ENCODE measurements at regions of chr21 and their contacts with region 1.

Region 1: GRCh38 chr21:14545906-14546480 is at the start of gene SAMSN1:
- DNase-seq: peak; percentile 37 to 88 (median 67)
- ATAC-seq: peak; percentile 90
- H3K4me3 ChIP-seq: peak within 1 kb of the TSS; percentile 53 to 81
- H3K4me3 Mint-ChIP-seq: peak within 1 kb of the TSS; percentile 93
- H3K27ac ChIP-seq: peak within 1 kb of the TSS; percentile 65 to 70
- H3K27ac Mint-ChIP-seq: peak within 1 kb of the TSS; percentile 97
- H3K4me1 ChIP-seq: peaks cover 41% of the 10 kb centered on the region
- H3K4me1 Mint-ChIP-seq: peaks cover 60% of the 10 kb centered on the region
- H3K27me3 ChIP-seq: no peaks in the 10 kb centered on the region
- H3K27me3 Mint-ChIP-seq: no peaks in the 10 kb centered on the region
- CTCF ChIP-seq: no peak
- total RNA-seq, gene SAMSN1: 45.8 to 47.0 TPM

Region 2: GRCh38 chr21:14382835-14383594 is 163.0 kb before region 1 on chr21 and contains the start of gene HSPA13:
- CTCF ChIA-PET with region 1: no interaction called
- POLR2A ChIA-PET with region 1: no interaction called
- intact Hi-C with region 1: loop called (anchors 2 to 5 kb)
- DNase-seq: peak; percentile 97 to 100 (median 99)
- ATAC-seq: peak; percentile 91
- H3K4me3 ChIP-seq: peak within 1 kb of the TSS; percentile 65 to 92
- H3K4me3 Mint-ChIP-seq: peak within 1 kb of the TSS; percentile 100
- H3K27ac ChIP-seq: peak within 1 kb of the TSS; percentile 94 to 96
- H3K27ac Mint-ChIP-seq: peak within 1 kb of the TSS; percentile 100
- H3K4me1 ChIP-seq: peaks cover 24% of the 10 kb centered on the region
- H3K4me1 Mint-ChIP-seq: peaks cover 40% of the 10 kb centered on the region
- H3K27me3 ChIP-seq: no peaks in the 10 kb centered on the region
- H3K27me3 Mint-ChIP-seq: no peaks in the 10 kb centered on the region
- CTCF ChIP-seq: no peak
- total RNA-seq, gene HSPA13: 54.3 to 58.1 TPM

Region 3: DNA sequence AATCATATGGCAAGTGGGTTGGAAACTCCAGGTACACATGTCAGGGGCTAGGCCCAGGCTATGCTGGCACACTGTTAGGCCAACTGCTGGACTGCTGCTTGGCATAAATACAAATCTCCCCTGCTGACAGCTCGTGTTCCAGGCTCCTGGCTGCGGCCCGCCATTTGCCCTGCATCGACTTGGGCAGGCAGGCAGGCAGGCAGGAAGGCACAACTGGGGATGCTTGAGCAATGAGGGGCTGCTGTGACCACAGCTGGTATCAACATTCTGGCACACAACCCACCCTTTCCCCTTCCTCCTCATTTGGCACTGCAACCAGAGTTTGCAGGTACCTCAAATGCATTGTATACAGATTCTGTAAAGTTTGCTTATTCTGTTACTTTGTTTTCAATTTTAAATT is 53.1 kb before region 1 on chr21:
- CTCF ChIA-PET with region 1: no interaction called
- POLR2A ChIA-PET with region 1: no interaction called
- intact Hi-C with region 1: loop called in 1 of 2 experiments (anchors 10 kb)
- DNase-seq: no peak
- ATAC-seq: no peak
- H3K4me3 ChIP-seq: no peak overlapping the region
- H3K4me3 Mint-ChIP-seq: no peak overlapping the region
- H3K27ac ChIP-seq: no peak overlapping the region
- H3K27ac Mint-ChIP-seq: no peak overlapping the region
- H3K4me1 ChIP-seq: no peaks in the 10 kb centered on the region
- H3K4me1 Mint-ChIP-seq: no peaks in the 10 kb centered on the region
- H3K27me3 ChIP-seq: no peaks in the 10 kb centered on the region
- H3K27me3 Mint-ChIP-seq: no peaks in the 10 kb centered on the region
- CTCF ChIP-seq: no peak

Region 4: DNA sequence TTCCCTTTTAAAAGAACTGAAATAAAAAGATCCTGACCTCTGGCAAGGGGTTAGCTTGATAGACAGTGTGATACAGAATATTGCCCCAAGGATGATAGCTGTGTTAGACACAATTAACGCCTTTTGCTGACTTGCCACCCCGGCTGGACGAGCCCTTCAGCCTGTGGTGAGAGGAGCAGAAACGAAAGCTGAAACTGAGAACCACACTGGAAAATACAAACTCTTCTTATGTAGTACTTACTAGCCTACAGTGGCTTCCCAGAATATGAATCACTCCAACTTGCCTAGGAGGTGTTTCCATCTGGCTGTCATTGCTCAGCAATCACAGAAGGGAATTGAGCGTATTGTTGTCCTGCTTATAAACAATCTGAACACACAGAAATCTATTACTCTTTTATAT is 22.8 kb before region 1 on chr21:
- CTCF ChIA-PET with region 1: no interaction called
- POLR2A ChIA-PET with region 1: no interaction called
- intact Hi-C with region 1: loop called in 1 of 2 experiments (anchors 2 kb)
- DNase-seq: peak in 3 of 9 experiments; percentile 12 to 63 (median 56)
- ATAC-seq: peak; percentile 49
- H3K4me3 ChIP-seq: peak overlapping the region in 1 of 2 experiments; percentile 18
- H3K4me3 Mint-ChIP-seq: peak overlapping the region; percentile 67
- H3K27ac ChIP-seq: peak overlapping the region in 1 of 2 experiments; percentile 21
- H3K27ac Mint-ChIP-seq: peak overlapping the region; percentile 4
- H3K4me1 ChIP-seq: peaks cover 10% of the 10 kb centered on the region
- H3K4me1 Mint-ChIP-seq: peaks cover 58% of the 10 kb centered on the region
- H3K27me3 ChIP-seq: no peaks in the 10 kb centered on the region
- H3K27me3 Mint-ChIP-seq: no peaks in the 10 kb centered on the region
- CTCF ChIP-seq: no peak

Region 5: GRCh38 chr21:14533504-14534428 is 12.2 kb before region 1 on chr21:
- CTCF ChIA-PET with region 1: interaction called, 3 read pairs
- POLR2A ChIA-PET with region 1: interaction called, 3 read pairs
- intact Hi-C with region 1: loop called in 1 of 2 experiments (anchors 1 kb)
- DNase-seq: peak in 3 of 9 experiments; percentile 17 to 90 (median 85)
- ATAC-seq: peak; percentile 79
- H3K4me3 ChIP-seq: peak overlapping the region in 1 of 2 experiments; percentile 46
- H3K4me3 Mint-ChIP-seq: peak overlapping the region; percentile 75
- H3K27ac ChIP-seq: peak overlapping the region; percentile 55 to 98
- H3K27ac Mint-ChIP-seq: peak overlapping the region; percentile 96
- H3K4me1 ChIP-seq: peaks cover 12% of the 10 kb centered on the region
- H3K4me1 Mint-ChIP-seq: peaks cover 61% of the 10 kb centered on the region
- H3K27me3 ChIP-seq: no peaks in the 10 kb centered on the region
- H3K27me3 Mint-ChIP-seq: no peaks in the 10 kb centered on the region
- CTCF ChIP-seq: no peak

Region 6: GRCh38 chr21:14591882-14592281 is 45.9 kb after region 1 on chr21:
- CTCF ChIA-PET with region 1: no interaction called
- POLR2A ChIA-PET with region 1: no interaction called
- intact Hi-C with region 1: loop called in 1 of 2 experiments (anchors 5 kb)
- DNase-seq: peak in 2 of 9 experiments; percentile 35 to 56
- ATAC-seq: peak; percentile 23
- H3K4me3 ChIP-seq: no peak overlapping the region
- H3K4me3 Mint-ChIP-seq: no peak overlapping the region
- H3K27ac ChIP-seq: peak overlapping the region in 1 of 2 experiments; percentile 33
- H3K27ac Mint-ChIP-seq: peak overlapping the region; percentile 14
- H3K4me1 ChIP-seq: peaks cover 8% of the 10 kb centered on the region
- H3K4me1 Mint-ChIP-seq: peaks cover 11% of the 10 kb centered on the region
- H3K27me3 ChIP-seq: no peaks in the 10 kb centered on the region
- H3K27me3 Mint-ChIP-seq: no peaks in the 10 kb centered on the region
- CTCF ChIP-seq: no peak